MCF 10A (cell line): ENCODE measurements at regions of chr6 and their contacts with region 1.

Region 1: DNA sequence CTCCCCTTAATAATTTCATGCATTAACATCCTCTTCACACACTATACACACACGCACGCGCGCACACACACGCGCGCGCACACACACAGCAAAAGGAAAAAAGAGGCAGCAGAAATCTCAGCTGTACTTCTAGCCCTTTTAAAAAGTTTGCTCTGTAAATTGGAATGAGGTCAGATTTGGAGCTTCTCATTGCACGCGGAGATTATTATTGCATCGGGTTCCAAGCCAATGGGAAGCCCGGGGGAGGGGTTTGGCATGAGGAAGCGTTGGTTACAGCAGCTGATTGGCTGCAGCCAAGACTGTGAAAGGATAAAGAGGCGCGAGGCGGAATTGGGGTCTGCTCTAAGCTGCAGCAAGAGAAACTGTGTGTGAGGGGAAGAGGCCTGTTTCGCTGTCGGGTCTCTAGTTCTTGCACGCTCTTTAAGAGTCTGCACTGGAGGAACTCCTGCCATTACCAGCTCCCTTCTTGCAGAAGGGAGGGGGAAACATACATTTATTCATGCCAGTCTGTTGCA is at the start of gene SOX4:
- DNase-seq: peak; percentile 97
- H3K4me3 Mint-ChIP-seq: no peak within 1 kb of the TSS
- H3K27ac Mint-ChIP-seq: no peak within 1 kb of the TSS
- H3K4me1 Mint-ChIP-seq: no peaks in the 10 kb centered on the region
- H3K27me3 Mint-ChIP-seq: no peaks in the 10 kb centered on the region
- CTCF ChIP-seq: no peak
- total RNA-seq, gene SOX4: 12.8 and 12.9 TPM in 2 replicates

Region 2: DNA sequence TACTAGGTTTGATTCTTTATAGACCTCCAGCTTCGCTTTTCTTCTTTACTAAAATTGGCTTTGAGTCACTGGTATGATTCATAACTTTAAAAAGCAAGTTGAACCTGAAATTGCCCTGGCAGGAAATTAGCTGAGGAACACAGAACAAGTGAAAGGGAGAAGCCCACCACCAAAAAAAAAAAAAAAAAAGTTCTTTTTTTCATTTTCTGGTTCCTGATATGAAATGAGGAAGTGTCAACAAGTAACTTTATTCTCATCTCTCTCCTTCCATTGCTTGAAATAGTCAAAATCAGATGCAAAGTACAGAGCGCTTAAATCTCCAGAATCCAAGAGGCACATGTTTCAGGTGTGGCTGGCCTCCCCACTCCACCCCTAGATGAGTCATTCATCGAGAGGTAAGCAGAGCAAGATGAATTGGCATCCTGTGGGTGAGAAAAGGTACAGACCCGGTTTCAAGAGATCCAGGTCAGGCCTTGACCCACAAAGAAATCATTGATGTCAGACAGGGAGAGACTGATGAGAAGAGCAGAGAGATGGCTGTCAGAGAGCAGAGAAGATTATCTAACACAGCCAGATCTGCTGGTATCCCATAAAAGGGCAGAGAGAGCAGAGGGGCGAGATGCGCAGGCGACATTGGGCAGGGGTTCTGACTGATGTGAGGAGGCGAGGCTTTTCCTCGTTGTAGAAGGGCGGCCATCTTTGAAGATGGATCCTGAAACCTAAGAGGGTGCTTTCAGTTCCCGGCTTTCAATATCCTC is 1326.4 kb before region 1 on chr6:
- CTCF ChIA-PET with region 1: no interaction called
- POLR2A ChIA-PET with region 1: no interaction called
- intact Hi-C with region 1: no loop called
- DNase-seq: peak; percentile 61
- H3K4me3 Mint-ChIP-seq: no peak overlapping the region
- H3K27ac Mint-ChIP-seq: no peak overlapping the region
- H3K4me1 Mint-ChIP-seq: peaks cover 7% of the 10 kb centered on the region
- H3K27me3 Mint-ChIP-seq: no peaks in the 10 kb centered on the region
- CTCF ChIP-seq: no peak

Region 3: GRCh38 chr6:20789162-20789561 is 804.3 kb before region 1 on chr6:
- CTCF ChIA-PET with region 1: interaction called, 13 read pairs
- POLR2A ChIA-PET with region 1: interaction called, 6 read pairs
- intact Hi-C with region 1: loop called (anchors 1 kb)
- DNase-seq: peak; percentile 18
- H3K4me3 Mint-ChIP-seq: no peak overlapping the region
- H3K27ac Mint-ChIP-seq: no peak overlapping the region
- H3K4me1 Mint-ChIP-seq: no peaks in the 10 kb centered on the region
- H3K27me3 Mint-ChIP-seq: no peaks in the 10 kb centered on the region
- CTCF ChIP-seq: peak; percentile 15

Region 4: GRCh38 chr6:21332077-21332476 is 261.4 kb before region 1 on chr6:
- CTCF ChIA-PET with region 1: no interaction called
- POLR2A ChIA-PET with region 1: no interaction called
- intact Hi-C with region 1: loop called (anchors 2 kb)
- DNase-seq: no peak
- H3K4me3 Mint-ChIP-seq: no peak overlapping the region
- H3K27ac Mint-ChIP-seq: no peak overlapping the region
- H3K4me1 Mint-ChIP-seq: no peaks in the 10 kb centered on the region
- H3K27me3 Mint-ChIP-seq: no peaks in the 10 kb centered on the region
- CTCF ChIP-seq: no peak

Region 5: DNA sequence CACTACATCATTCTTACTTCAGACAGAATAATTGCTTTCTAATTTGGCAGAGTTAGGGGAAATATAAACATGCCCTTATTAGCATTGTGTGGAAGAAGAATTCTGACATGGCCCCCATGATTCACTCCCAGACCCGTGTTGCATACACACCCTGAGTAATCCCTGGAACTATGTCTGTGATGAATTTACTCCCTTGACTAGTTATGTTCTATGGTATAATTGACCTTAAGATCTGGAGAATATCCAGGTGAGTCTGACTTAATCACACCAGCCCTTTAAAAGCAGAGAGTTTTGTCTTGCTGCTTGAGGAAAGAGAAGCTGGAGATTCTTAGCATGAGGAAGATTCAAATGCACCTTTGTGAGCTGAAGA is 263.0 kb after region 1 on chr6:
- CTCF ChIA-PET with region 1: interaction called, 4 read pairs
- POLR2A ChIA-PET with region 1: interaction called, 5 read pairs
- intact Hi-C with region 1: loop called (anchors 1 kb)
- DNase-seq: peak; percentile 81
- H3K4me3 Mint-ChIP-seq: peak overlapping the region; percentile 50
- H3K27ac Mint-ChIP-seq: peak overlapping the region; percentile 90
- H3K4me1 Mint-ChIP-seq: peaks cover 13% of the 10 kb centered on the region
- H3K27me3 Mint-ChIP-seq: no peaks in the 10 kb centered on the region
- CTCF ChIP-seq: no peak

Region 6: GRCh38 chr6:22113026-22113766 is 519.7 kb after region 1 on chr6:
- CTCF ChIA-PET with region 1: no interaction called
- POLR2A ChIA-PET with region 1: interaction called, 7 read pairs
- intact Hi-C with region 1: loop called (anchors 1 kb)
- DNase-seq: peak; percentile 97
- H3K4me3 Mint-ChIP-seq: peak overlapping the region; percentile 33
- H3K27ac Mint-ChIP-seq: peak overlapping the region; percentile 69
- H3K4me1 Mint-ChIP-seq: peaks cover 16% of the 10 kb centered on the region
- H3K27me3 Mint-ChIP-seq: no peaks in the 10 kb centered on the region
- CTCF ChIP-seq: no peak

Region 7: GRCh38 chr6:22828179-22829062 is 1235.0 kb after region 1 on chr6:
- CTCF ChIA-PET with region 1: interaction called, 5 read pairs
- POLR2A ChIA-PET with region 1: interaction called, 3 read pairs
- intact Hi-C with region 1: loop called (anchors 1 kb)
- DNase-seq: peak; percentile 95
- H3K4me3 Mint-ChIP-seq: peak overlapping the region; percentile 68
- H3K27ac Mint-ChIP-seq: peak overlapping the region; percentile 92
- H3K4me1 Mint-ChIP-seq: peaks cover 22% of the 10 kb centered on the region
- H3K27me3 Mint-ChIP-seq: no peaks in the 10 kb centered on the region
- CTCF ChIP-seq: peak; percentile 72